ENCODE measurements at regions of chr7 and their contacts with region 1.

Region 1: GRCh38 chr7:139359366-139360209 is at the start of gene LUC7L2:
- DNase-seq: peak; percentile 99 to 100 (median 99)
- ATAC-seq: peak; percentile 72
- H3K4me3 ChIP-seq: peak within 1 kb of the TSS; percentile 91
- H3K4me3 Mint-ChIP-seq: peak within 1 kb of the TSS; percentile 99
- H3K27ac ChIP-seq: peak within 1 kb of the TSS; percentile 98 to 99
- H3K27ac Mint-ChIP-seq: peak within 1 kb of the TSS; percentile 98
- H3K4me1 ChIP-seq: peaks cover 25% of the 10 kb centered on the region
- H3K4me1 Mint-ChIP-seq: peaks cover 52% of the 10 kb centered on the region
- H3K27me3 ChIP-seq: no peaks in the 10 kb centered on the region
- H3K27me3 Mint-ChIP-seq: no peaks in the 10 kb centered on the region
- CTCF ChIP-seq: no peak
- total RNA-seq, gene LUC7L2: 177 to 194 TPM

Region 2: GRCh38 chr7:139230774-139231512 is 128.6 kb before region 1 on chr7 and contains the start of gene UBN2:
- CTCF ChIA-PET with region 1: no interaction called
- POLR2A ChIA-PET with region 1: interaction called, 20 read pairs
- intact Hi-C with region 1: loop called in 1 of 2 experiments (anchors 2 kb)
- DNase-seq: peak; percentile 70 to 96 (median 85)
- ATAC-seq: peak; percentile 66
- H3K4me3 ChIP-seq: peak within 1 kb of the TSS; percentile 97
- H3K4me3 Mint-ChIP-seq: peak within 1 kb of the TSS; percentile 97
- H3K27ac ChIP-seq: peak within 1 kb of the TSS; percentile 60 to 74
- H3K27ac Mint-ChIP-seq: peak within 1 kb of the TSS; percentile 89
- H3K4me1 ChIP-seq: peaks cover 11% of the 10 kb centered on the region
- H3K4me1 Mint-ChIP-seq: peaks cover 48% of the 10 kb centered on the region
- H3K27me3 ChIP-seq: no peaks in the 10 kb centered on the region
- H3K27me3 Mint-ChIP-seq: peaks cover 5% of the 10 kb centered on the region
- CTCF ChIP-seq: no peak
- total RNA-seq, gene UBN2: 9.6 to 13.3 TPM

Region 3: DNA sequence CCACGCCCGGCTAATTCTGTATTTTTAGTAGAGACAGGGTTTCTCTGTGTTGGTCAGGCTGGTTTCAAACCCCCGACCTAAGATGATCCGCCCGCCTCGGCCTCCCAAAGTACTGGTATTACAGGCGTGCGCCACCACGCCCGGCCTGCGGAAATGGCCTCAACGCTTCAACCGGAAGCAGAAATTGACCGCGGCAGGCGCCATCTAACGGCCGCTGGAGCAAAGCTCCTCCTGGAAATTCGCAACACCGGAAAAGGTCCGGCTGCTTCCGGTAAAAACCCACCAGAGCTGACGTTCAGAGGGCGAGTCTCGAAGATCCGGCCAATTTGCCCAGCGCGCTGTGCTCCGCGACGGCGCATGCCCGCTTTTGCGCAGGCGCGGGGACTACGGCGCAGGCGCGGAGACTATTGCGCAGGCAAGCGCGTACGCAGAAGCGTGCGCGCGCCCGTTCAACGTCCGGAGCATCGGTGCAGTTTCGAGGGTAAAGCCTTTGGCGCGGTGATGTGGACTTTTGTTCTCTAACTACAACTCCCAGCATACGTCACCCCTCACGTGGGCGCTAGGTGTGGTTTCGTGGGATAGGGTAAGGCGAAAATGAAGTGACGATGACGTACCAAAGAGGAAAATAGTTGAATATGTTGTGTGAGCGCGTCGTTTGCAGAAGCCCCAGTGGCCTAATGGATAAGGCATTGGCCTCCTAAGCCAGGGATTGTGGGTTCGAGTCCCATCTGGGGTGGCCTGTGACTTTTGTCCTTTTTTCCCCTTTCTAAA is 19.4 kb before region 1 on chr7:
- CTCF ChIA-PET with region 1: interaction called, 4 read pairs
- POLR2A ChIA-PET with region 1: interaction called, 166 read pairs
- intact Hi-C with region 1: loop called (anchors 1 kb)
- DNase-seq: peak; percentile 95 to 100 (median 97)
- ATAC-seq: peak; percentile 82
- H3K4me3 ChIP-seq: peak overlapping the region; percentile 79
- H3K4me3 Mint-ChIP-seq: peak overlapping the region; percentile 94
- H3K27ac ChIP-seq: peak overlapping the region; percentile 98 to 99
- H3K27ac Mint-ChIP-seq: peak overlapping the region; percentile 99
- H3K4me1 ChIP-seq: peaks cover 19% of the 10 kb centered on the region
- H3K4me1 Mint-ChIP-seq: peaks cover 43% of the 10 kb centered on the region
- H3K27me3 ChIP-seq: no peaks in the 10 kb centered on the region
- H3K27me3 Mint-ChIP-seq: peaks cover 8% of the 10 kb centered on the region
- CTCF ChIP-seq: peak; percentile 43

Region 4: GRCh38 chr7:139370301-139370942 is 10.8 kb after region 1 on chr7:
- CTCF ChIA-PET with region 1: interaction called, 4 read pairs
- POLR2A ChIA-PET with region 1: interaction called, 17 read pairs
- intact Hi-C with region 1: no loop called
- DNase-seq: no peak
- ATAC-seq: no peak
- H3K4me3 ChIP-seq: no peak overlapping the region
- H3K4me3 Mint-ChIP-seq: peak overlapping the region; percentile 23
- H3K27ac ChIP-seq: no peak overlapping the region
- H3K27ac Mint-ChIP-seq: peak overlapping the region; percentile 56
- H3K4me1 ChIP-seq: peaks cover 18% of the 10 kb centered on the region
- H3K4me1 Mint-ChIP-seq: peaks cover 89% of the 10 kb centered on the region
- H3K27me3 ChIP-seq: no peaks in the 10 kb centered on the region
- H3K27me3 Mint-ChIP-seq: no peaks in the 10 kb centered on the region
- CTCF ChIP-seq: no peak

Region 5: DNA sequence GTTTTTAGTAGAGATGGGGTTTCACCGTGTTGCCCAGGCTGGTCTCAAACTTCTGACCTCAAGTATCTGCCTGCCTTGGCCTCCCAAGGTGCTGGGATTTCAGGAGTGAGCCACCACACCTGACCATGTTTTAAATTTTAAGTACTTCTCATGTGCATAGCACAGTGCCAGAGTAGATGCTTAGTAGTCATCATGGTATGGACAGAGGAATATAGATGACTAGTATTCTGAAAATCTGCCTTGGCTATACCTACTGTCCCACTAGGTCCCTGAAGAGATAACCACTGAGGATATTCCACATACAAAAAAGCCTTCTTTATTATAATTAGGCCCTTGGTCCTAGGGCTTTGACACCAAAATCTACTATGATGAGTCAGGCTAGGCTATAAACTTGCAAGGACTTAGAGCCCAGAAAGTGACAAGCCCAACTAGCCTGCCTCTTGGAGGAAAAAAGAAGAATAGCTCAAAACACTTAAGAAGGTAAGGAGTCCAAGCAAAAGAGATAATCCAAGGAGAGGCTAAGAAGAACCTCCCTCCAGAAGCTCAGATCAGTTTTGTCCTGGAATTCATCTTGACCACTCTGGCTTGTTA is 34.1 kb after region 1 on chr7:
- CTCF ChIA-PET with region 1: no interaction called
- POLR2A ChIA-PET with region 1: interaction called, 17 read pairs
- intact Hi-C with region 1: loop called in 1 of 2 experiments (anchors 5 kb)
- DNase-seq: no peak
- ATAC-seq: no peak
- H3K4me3 ChIP-seq: no peak overlapping the region
- H3K4me3 Mint-ChIP-seq: no peak overlapping the region
- H3K27ac ChIP-seq: peak overlapping the region in 1 of 2 donors; percentile 4
- H3K27ac Mint-ChIP-seq: peak overlapping the region; percentile 35
- H3K4me1 ChIP-seq: peaks cover 21% of the 10 kb centered on the region
- H3K4me1 Mint-ChIP-seq: peaks cover 62% of the 10 kb centered on the region
- H3K27me3 ChIP-seq: no peaks in the 10 kb centered on the region
- H3K27me3 Mint-ChIP-seq: no peaks in the 10 kb centered on the region
- CTCF ChIP-seq: no peak

Region 6: DNA sequence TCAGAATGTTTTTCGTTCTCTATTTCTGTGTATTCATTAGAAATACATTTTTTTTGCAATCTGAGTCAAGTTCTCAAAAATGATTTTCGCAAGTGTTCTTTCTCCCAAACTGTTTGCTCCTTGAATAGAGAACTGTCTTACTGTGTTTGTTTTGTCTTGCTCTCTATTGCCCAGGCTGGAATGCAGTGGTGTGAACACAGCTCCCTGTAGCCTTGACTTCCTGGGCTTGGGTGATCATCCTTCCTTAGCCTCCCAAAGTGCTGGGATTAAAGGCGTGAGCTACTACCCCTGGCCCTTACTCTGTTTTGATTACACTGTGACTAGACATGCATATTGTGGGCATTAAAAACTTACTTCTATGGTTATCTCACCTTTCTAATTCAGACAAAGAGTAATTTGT is 56.8 kb after region 1 on chr7:
- CTCF ChIA-PET with region 1: interaction called, 3 read pairs
- POLR2A ChIA-PET with region 1: interaction called, 5 read pairs
- intact Hi-C with region 1: loop called in 1 of 2 experiments (anchors 10 kb)
- DNase-seq: no peak
- ATAC-seq: no peak
- H3K4me3 ChIP-seq: no peak overlapping the region
- H3K4me3 Mint-ChIP-seq: no peak overlapping the region
- H3K27ac ChIP-seq: no peak overlapping the region
- H3K27ac Mint-ChIP-seq: no peak overlapping the region
- H3K4me1 ChIP-seq: no peaks in the 10 kb centered on the region
- H3K4me1 Mint-ChIP-seq: no peaks in the 10 kb centered on the region
- H3K27me3 ChIP-seq: no peaks in the 10 kb centered on the region
- H3K27me3 Mint-ChIP-seq: no peaks in the 10 kb centered on the region
- CTCF ChIP-seq: no peak